ENCODE measurements at regions of chr9 and their contacts with region 1.

Region 1: GRCh38 chr9:110152704-110153374 is 55.1 kb downstream of the C9orf152 start:
- DNase-seq: no peak
- H3K4me3 Mint-ChIP-seq: no peak overlapping the region
- H3K27ac Mint-ChIP-seq: peak overlapping the region; percentile 73
- H3K4me1 Mint-ChIP-seq: peaks cover 91% of the 10 kb centered on the region
- H3K27me3 Mint-ChIP-seq: no peaks in the 10 kb centered on the region

Region 2: GRCh38 chr9:109887079-109887478 is 265.8 kb before region 1 on chr9:
- CTCF ChIA-PET with region 1: interaction called, 5 read pairs
- POLR2A ChIA-PET with region 1: interaction called, 12 read pairs
- DNase-seq: no peak
- H3K4me3 Mint-ChIP-seq: peak overlapping the region; percentile 31
- H3K27ac Mint-ChIP-seq: peak overlapping the region; percentile 92
- H3K4me1 Mint-ChIP-seq: peaks cover 66% of the 10 kb centered on the region
- H3K27me3 Mint-ChIP-seq: no peaks in the 10 kb centered on the region

Measured in activated CD4-positive, alpha-beta memory T cell treated with anti-CD3 and anti-CD28 coated beads, Interleukin-2, amount 10 ng/mL, durations not matched to agents 7 days and 5 days (primary cell).